ENCODE measurements at regions of chr12 and their contacts with region 1.

Region 1: DNA sequence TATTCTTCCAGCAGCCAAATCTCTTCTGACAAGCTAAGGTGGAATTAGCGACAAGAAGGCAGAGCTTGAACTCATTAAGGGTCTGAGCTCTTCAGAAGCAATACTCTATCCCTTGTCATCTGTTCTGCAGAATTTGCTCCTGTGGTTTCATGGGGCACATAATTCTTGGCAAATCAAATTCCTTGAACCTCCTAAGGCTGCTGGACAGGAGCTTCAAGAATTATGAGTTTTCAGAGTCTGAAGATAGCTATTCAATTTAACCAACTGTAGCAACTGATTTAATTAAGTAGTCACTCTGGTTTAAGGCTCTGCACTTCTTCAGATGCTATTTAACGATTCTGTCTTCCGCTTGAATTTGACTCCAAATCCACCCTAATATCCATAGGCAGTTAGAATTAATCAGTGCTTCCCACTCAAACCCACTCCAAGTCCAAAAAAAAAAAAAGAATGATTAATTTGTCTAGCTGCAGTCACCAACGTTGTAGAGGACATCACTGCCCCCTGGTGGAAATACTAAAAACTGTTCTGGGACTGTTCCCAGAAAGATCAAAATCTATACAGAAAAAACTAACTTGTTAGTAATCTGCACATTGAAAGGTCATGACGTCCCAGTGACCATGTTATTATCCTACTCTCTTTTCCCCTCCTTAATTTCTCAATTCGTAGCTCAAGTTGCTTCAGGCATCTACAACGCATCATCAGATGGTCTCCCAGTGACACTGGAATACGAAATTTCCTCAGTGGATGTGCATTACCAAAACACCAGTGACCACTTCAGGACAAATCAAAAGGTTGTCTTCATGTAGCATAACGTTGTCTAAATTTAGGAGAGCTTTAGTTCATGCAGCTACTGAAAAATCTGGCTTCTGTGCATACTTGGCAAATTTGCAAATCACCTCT is 169.8 kb downstream of the KIF21A start:
- DNase-seq: peak; percentile 67 to 73
- H3K4me3 ChIP-seq: no peak overlapping the region
- H3K4me1 ChIP-seq: 0 out of 2 replicates have a peak, but pooled peaks cover 2% of the 10 kb centered on the region
- H3K27me3 ChIP-seq: no peaks in the 10 kb centered on the region

Region 2: DNA sequence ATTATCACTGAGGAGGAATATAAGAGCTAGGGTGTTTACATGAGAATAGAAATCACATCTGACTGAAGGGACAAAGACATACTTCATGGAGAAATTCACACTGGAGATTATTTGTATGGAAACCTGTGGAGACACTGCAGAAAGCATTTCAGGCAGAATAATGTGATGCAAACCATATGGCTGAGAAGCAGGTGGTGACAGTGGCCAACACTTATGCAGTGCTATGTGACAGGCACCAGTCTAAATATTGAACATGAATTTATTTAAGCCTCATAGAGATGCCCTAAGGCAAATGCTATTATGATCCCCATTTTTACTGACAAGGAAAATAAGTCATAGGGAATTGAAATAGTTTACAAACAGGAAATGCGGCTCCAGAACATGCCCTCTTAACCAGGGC is 940.3 kb before region 1 on chr12:
- in situ Hi-C with region 1: loop called (anchors 25 kb)
- DNase-seq: no peak
- H3K4me3 ChIP-seq: no peak overlapping the region
- H3K4me1 ChIP-seq: peaks cover 5% of the 10 kb centered on the region; the same call in 1 of the 2 replicates
- H3K27me3 ChIP-seq: no peaks in the 10 kb centered on the region

Measured in HAP-1 (cell line).